ENCODE measurements at regions of chr1 and their contacts with region 1.

Region 1: GRCh38 chr1:42669936-42670335 is 11.7 kb downstream of the PPIH start:
- DNase-seq: no peak
- ATAC-seq: no peak
- H3K4me3 ChIP-seq: no peak overlapping the region
- H3K27ac ChIP-seq: no peak overlapping the region
- H3K4me1 ChIP-seq: peaks cover 0 to 12% (median 3%) of the 10 kb centered on the region in 12 donors
- H3K27me3 ChIP-seq: no peaks in the 10 kb centered on the region
- CTCF ChIP-seq: no peak
- POLR2A ChIP-seq: no peak

Region 2: DNA sequence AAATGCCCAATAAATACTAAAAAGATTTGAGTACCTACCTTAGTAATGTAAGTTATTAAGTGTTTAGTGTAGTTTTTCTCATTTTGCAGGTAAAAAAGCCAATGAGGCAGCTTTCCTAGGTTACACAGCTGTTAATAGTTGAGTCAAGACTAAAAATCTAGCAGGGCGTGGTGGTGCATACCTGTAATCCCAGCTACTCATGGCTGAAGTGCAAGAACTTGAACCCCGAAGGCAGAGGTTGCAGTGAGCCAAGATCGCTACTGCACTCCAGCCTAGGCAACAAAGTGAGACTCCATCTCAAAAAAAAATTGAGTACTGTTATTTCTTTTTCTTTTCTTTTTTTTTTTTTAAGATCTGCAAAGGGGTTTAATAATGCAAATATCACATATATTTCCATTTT is 20.0 kb after region 1 on chr1:
- intact Hi-C with region 1: loop called in 1 of 10 experiments (anchors 2 kb)
- DNase-seq: no peak
- ATAC-seq: no peak
- H3K4me3 ChIP-seq: no peak overlapping the region
- H3K27ac ChIP-seq: no peak overlapping the region
- H3K4me1 ChIP-seq: peaks cover 11 to 87% (median 77%) of the 10 kb centered on the region in 12 donors
- H3K27me3 ChIP-seq: no peaks in the 10 kb centered on the region
- CTCF ChIP-seq: no peak
- POLR2A ChIP-seq: no peak

Region 3: DNA sequence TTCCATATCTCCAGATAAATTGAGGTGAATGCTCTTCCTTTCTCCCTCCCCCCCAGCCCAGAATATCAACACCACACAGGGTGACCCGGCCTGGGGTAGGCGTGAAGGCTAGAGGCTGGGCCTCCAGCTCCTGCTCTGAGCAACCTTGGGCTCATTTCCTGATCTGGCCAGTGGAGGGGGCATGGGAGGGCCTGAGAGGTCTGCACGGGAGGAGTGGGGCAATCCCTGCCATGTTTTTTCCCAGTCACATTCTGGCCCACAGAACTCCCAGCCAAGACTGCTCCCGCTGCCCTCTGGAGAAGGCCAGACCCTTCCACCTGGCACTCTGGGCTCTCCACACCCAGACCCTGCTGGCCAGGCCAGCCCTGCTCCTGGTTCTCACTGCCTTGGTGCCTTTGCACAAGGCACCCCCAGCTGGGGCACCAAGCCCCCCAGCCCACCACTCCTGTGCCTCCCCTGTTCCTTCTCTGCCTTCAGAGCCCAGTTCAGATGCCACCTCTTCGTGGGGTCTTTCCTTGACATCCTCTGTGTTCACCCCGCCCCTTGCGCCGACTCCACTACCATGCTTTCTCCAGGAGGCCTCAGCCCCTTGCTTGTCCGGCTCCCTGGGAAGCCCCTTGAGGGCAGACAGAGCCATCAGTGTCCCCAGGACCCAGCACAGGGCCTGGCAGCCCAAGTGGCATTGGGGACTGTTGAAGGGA is 66.4 kb after region 1 on chr1:
- intact Hi-C with region 1: no loop called
- DNase-seq: no peak
- ATAC-seq: no peak
- H3K4me3 ChIP-seq: no peak overlapping the region
- H3K27ac ChIP-seq: no peak overlapping the region
- H3K4me1 ChIP-seq: peaks cover 0 to 18% (median 0%) of the 10 kb centered on the region in 12 donors
- H3K27me3 ChIP-seq: no peaks in the 10 kb centered on the region
- CTCF ChIP-seq: peak in 2 of 12 donors; percentile 6
- POLR2A ChIP-seq: no peak

Region 4: GRCh38 chr1:42747125-42747524 is 77.2 kb after region 1 on chr1:
- intact Hi-C with region 1: no loop called
- DNase-seq: peak in 2 of 5 donors; percentile 49 to 55
- ATAC-seq: peak in 3 of 4 donors; percentile 65 to 70 (median 68)
- H3K4me3 ChIP-seq: no peak overlapping the region
- H3K27ac ChIP-seq: no peak overlapping the region
- H3K4me1 ChIP-seq: peaks cover 0 to 19% (median 0%) of the 10 kb centered on the region in 12 donors
- H3K27me3 ChIP-seq: no peaks in the 10 kb centered on the region
- CTCF ChIP-seq: peak; percentile 47 to 72 (median 60)
- POLR2A ChIP-seq: no peak

Measured in heart left ventricle (tissue), 16 donors.